Activated CD8-positive, alpha-beta T cell treated with anti-CD3 and anti-CD28 coated beads, Interleukin-2, amount 10 ng/mL, durations not matched to agents 7 days and 5 days (primary cell): ENCODE measurements at regions of chr12 and their contacts with region 1.

Region 1: GRCh38 chr12:42023733-42024494 is 120.8 kb downstream of the GXYLT1 start:
- DNase-seq: peak; percentile 72
- ATAC-seq: peak; percentile 92
- H3K4me3 Mint-ChIP-seq: peak overlapping the region; percentile 26
- H3K27ac Mint-ChIP-seq: no peak overlapping the region
- H3K4me1 Mint-ChIP-seq: peaks cover 6% of the 10 kb centered on the region
- H3K27me3 Mint-ChIP-seq: peaks cover 7% of the 10 kb centered on the region

Region 2: DNA sequence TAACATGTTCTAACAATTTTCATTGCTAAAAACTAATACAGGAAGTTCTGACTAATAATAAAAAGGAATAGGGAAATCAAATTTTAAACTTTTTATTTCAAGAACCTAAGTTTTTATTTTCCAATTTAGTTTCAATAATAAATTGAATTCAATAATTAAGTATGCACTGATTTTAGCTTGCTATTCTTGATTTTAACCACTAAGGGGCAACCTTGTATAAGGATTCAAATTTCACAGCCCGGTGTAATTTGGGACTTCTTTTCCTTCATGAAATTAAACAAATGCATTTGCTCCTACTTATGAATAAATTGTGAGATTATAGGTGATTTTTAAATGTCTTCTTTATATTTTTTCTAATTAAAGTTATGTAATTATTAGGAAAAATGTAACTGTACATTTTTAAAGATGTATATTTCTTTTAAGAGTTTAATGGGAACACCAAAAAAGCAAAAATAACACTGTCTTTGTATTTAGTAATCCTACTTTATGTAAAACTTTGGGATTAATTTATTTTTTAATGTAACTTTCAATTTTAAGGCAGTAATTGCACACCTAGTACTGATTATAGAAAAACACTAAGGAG is 1077.2 kb before region 1 on chr12:
- CTCF ChIA-PET with region 1: interaction called, 19 read pairs
- POLR2A ChIA-PET with region 1: no interaction called
- DNase-seq: no peak
- ATAC-seq: no peak
- H3K4me3 Mint-ChIP-seq: no peak overlapping the region
- H3K27ac Mint-ChIP-seq: no peak overlapping the region
- H3K4me1 Mint-ChIP-seq: no peaks in the 10 kb centered on the region
- H3K27me3 Mint-ChIP-seq: peaks cover 3% of the 10 kb centered on the region

Region 3: DNA sequence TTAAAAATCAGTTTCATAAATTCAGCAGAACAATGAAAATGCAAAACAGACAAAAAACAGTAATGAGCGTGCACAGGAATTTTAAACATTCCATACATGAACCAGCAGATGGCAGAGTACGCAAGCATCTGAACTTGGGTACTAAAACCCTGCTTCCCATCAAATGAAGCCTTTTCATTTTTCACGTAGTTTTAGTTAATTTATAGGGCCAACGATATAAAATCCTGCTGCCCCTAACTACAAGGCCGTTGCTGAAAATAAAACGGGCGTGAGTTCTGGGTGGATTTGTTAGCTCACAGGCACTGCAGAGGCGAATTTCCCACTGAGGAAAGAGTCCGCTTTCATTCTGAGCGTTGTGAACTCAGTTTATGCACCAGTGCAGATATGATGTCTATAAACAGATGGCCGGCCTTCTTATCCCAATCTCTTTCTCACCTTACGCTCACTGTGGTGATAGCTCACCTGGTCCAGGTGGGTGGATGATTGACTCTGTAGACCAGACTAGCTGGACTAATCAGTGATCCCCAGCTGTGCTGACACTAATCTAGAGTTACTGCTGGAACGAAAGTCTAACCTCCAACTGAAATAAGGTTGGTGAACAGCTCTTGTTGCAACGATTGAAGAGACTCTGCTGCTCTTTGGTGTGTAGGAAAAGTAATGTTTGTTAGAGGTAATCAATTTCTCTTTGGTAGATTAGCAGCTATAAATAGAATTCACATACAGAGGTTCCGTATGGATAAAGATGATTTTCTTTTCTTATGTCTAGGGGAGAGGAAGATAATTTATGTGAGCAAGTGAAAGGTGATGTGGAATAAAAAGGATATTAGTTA is 746.6 kb before region 1 on chr12:
- CTCF ChIA-PET with region 1: interaction called, 17 read pairs
- POLR2A ChIA-PET with region 1: no interaction called
- DNase-seq: no peak
- ATAC-seq: no peak
- H3K4me3 Mint-ChIP-seq: no peak overlapping the region
- H3K27ac Mint-ChIP-seq: no peak overlapping the region
- H3K4me1 Mint-ChIP-seq: no peaks in the 10 kb centered on the region
- H3K27me3 Mint-ChIP-seq: no peaks in the 10 kb centered on the region

Region 4: DNA sequence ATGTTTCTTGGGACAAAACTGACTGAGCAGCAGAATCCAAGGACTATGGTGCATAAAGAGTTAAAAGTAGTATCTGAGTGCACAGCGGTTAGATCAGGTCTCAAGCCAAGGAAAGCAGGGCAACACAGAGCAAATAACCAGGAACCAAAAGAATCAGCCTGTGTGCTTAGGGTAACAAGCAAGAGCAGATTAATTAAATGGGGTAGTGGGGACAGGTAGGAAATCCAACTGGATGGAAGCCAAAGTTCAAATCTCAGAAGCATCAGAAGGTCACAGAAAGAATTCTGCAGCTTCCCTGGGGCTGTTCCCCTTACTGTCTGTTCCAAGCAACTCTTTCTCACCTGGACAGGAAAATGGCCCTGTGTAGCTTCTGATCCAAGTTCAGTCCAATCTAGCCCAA is 11.8 kb before region 1 on chr12:
- CTCF ChIA-PET with region 1: interaction called, 13 read pairs
- POLR2A ChIA-PET with region 1: no interaction called
- DNase-seq: no peak
- ATAC-seq: no peak
- H3K4me3 Mint-ChIP-seq: no peak overlapping the region
- H3K27ac Mint-ChIP-seq: no peak overlapping the region
- H3K4me1 Mint-ChIP-seq: no peaks in the 10 kb centered on the region
- H3K27me3 Mint-ChIP-seq: no peaks in the 10 kb centered on the region